HAP-1 (cell line): ENCODE measurements at regions of chr6 and their contacts with region 1.

Region 1: DNA sequence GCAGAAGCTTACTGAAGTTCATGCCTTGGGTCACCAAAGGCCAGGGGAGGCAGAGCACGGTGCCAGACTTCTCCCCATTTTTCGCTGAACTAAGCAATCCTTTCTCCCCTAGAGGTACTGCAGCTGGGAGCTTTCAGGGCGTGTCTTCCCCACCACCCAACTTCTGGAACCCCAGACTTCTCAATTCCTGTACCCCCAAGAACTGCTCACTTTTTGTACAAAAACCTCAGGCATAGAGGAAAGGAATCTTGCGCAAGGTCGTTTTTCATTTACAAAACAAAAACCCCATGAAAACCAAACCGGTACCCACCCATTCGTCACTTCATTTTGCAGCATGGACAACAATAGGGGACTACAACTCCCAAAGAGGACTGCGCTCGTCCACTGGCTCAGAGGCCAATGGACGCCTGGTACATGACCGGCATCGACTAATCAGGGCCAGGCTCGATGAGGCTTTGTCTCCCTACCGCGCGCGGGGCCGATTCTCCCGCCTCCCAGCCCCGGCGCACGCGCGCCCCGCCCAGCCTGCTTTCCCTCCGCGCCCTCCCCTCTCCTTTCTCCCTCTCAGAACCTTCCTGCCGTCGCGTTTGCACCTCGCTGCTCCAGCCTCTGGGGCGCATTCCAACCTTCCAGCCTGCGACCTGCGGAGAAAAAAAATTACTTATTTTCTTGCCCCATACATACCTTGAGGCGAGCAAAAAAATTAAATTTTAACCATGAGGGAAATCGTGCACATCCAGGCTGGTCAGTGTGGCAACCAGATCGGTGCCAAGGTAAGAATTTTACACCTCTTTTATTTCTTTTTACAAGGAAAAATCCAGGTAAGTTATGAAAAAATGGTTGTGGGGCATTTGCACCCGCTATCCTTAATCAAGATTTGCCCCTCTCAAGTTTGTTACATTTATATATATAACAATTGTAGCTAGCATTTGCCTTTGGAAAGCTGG is at the start of gene TUBB:
- DNase-seq: peak; percentile 98
- H3K4me3 ChIP-seq: peak within 1 kb of the TSS; percentile 69
- H3K4me1 ChIP-seq: peaks cover 36% of the 10 kb centered on the region
- H3K27me3 ChIP-seq: no peaks in the 10 kb centered on the region

Region 2: DNA sequence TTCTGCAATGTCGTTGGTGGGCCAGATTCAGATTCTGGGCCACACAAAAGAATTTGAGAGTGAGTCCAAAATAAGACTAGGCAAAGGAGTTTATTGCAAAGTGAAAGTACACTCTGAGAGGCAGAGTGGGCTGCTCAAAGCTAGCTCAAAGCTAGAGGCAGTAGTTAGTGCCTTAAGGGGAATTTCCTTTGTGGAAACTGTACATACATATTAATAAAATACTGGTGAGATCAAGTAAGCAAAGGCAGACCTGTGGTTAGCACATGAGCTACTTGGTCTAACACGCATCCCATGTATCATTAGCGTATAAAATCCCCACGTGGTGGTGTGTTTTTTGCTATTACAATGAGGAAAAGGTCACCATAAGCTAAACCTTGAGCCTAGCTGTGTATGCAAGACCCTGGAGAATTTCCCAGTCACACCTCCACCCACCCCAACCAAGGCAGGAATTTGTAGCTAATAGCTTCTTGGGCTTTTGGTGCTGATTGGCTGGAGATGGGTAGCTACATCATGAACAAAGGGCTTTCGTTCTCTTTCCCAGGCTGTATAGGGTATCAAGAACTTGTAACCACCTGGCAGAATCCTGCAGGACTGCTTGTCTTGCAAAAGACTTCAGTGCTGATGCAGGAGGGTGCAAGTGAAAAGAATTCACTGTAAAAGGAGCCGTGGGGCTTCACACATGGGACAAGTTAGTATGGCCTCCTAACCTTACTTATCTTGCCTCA is 492.1 kb before region 1 on chr6:
- in situ Hi-C with region 1: no loop called
- DNase-seq: no peak
- H3K4me3 ChIP-seq: no peak overlapping the region
- H3K4me1 ChIP-seq: no peaks in the 10 kb centered on the region
- H3K27me3 ChIP-seq: peaks cover 16% of the 10 kb centered on the region; the same call in 1 of the 2 replicates

Region 3: GRCh38 chr6:30480536-30481156 is 239.4 kb before region 1 on chr6:
- in situ Hi-C with region 1: no loop called
- DNase-seq: no peak
- H3K4me3 ChIP-seq: no peak overlapping the region
- H3K4me1 ChIP-seq: peaks cover 4% of the 10 kb centered on the region
- H3K27me3 ChIP-seq: peaks cover 42% of the 10 kb centered on the region

Region 4: GRCh38 chr6:30616811-30617564 is 103.1 kb before region 1 on chr6 and contains the start of gene PPP1R10:
- in situ Hi-C with region 1: loop called (anchors 5 kb)
- DNase-seq: peak; percentile 99
- H3K4me3 ChIP-seq: peak within 1 kb of the TSS; percentile 99
- H3K4me1 ChIP-seq: peaks cover 28% of the 10 kb centered on the region
- H3K27me3 ChIP-seq: no peaks in the 10 kb centered on the region